ENCODE measurements at regions of chr15 and their contacts with region 1.

Region 1: DNA sequence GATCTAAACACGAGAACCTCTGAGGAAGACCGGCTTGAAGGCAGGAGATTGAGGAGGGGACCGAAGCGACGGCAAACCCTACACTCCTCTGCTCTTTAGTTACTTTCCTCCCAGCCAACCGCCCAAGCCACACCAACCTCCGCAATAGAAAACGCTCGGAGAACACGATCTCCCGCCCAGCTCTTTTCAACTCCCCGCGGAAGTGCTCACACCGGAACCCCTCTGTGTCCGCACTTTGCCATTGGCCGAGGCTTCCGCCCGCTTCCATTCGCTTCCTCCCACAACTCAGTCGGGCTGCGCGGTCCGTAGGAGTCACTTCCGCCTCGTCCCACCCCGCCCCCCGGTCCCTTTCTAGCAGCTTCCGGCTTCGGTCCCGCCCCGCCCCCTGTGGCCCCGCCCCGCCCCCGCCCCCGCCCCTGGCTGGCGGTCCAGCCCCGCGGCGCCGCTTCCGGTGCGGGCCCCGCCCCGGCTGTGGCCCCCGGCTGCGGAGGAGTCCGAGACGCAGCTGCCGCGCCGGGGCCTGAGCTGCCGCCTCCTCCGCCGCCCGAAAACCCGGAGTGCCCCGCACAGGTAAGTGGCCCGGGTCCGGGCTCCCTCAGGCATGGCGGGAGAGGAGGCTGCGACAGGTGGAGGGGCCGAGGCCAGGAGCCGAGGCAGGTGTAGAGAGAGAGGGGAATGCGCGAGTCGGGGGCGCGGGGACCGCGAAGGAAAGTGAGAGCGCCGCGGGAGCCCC is at the start of gene ARID3B:
- DNase-seq: peak; percentile 98
- H3K4me3 ChIP-seq: peak within 1 kb of the TSS; percentile 84 to 94
- H3K27ac ChIP-seq: peak within 1 kb of the TSS; percentile 78 to 81
- H3K4me1 ChIP-seq: peaks cover 1% of the 10 kb centered on the region
- H3K27me3 ChIP-seq: no peaks in the 10 kb centered on the region
- CTCF ChIP-seq: no peak
- POLR2A ChIP-seq: peak; percentile 45
- total RNA-seq, gene ARID3B: 5.1 to 36.7 TPM

Region 2: GRCh38 chr15:74340139-74340538 is 200.8 kb before region 1 on chr15:
- intact Hi-C with region 1: no loop called
- DNase-seq: no peak
- H3K4me3 ChIP-seq: no peak overlapping the region
- H3K27ac ChIP-seq: no peak overlapping the region
- H3K4me1 ChIP-seq: no peaks in the 10 kb centered on the region
- H3K27me3 ChIP-seq: no peaks in the 10 kb centered on the region
- CTCF ChIP-seq: no peak
- POLR2A ChIP-seq: no peak

Region 3: DNA sequence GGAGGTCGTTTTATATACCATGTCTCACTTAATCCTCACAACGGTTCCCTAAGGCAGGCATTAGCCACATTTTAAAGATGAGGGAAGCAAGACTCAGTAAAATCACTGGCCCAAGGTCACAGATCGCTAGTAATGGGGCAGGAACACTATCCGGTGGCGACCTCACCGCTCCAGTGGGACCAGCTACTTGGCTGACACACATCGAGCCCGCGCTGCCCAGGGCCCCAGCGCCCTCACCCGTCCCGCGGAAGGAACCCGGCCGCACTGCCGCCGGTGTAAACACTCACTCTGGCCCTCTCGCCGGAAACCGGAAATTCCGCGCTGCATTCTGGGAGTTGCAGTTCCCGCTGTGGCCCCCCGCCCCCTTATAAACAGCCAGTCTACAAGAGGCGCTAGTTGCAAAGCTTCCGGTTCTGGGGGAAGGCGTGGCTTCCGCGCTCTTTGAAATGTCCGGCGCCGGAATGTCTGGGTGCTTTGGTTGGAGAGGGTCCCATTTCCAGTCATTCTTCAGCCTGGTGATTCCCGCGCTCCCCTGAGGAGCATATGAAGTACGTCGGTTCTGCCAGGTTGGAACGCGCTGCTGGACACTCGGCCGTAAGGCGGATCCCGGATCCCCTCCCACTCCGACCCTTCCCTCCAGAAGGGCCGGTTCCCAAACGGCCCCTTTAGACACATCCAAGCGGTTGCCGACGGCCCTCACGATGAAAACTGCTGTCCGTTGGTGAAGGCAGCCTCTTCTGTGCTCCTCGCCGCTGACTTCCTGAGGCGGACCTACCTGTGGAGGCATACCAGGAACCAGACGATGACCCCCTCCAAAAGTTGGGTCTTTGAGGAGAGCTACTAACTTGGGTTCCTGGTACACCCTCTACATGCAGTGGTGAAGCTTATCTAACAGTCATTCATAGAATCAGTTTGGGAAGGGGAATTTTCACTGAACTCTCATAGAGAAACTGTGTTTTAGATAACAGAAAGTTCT is 79.8 kb before region 1 on chr15 and contains the start of gene UBL7:
- intact Hi-C with region 1: loop called (anchors 5 kb)
- DNase-seq: peak; percentile 98
- H3K4me3 ChIP-seq: peak within 1 kb of the TSS; percentile 55 to 60
- H3K27ac ChIP-seq: peak within 1 kb of the TSS; percentile 73 to 82
- H3K4me1 ChIP-seq: no peaks in the 10 kb centered on the region
- H3K27me3 ChIP-seq: no peaks in the 10 kb centered on the region
- CTCF ChIP-seq: peak in 3 of 4 experiments; percentile 25 to 47 (median 39)
- POLR2A ChIP-seq: peak; percentile 87
- total RNA-seq, gene UBL7: 83.1 to 85.2 TPM

Region 4: DNA sequence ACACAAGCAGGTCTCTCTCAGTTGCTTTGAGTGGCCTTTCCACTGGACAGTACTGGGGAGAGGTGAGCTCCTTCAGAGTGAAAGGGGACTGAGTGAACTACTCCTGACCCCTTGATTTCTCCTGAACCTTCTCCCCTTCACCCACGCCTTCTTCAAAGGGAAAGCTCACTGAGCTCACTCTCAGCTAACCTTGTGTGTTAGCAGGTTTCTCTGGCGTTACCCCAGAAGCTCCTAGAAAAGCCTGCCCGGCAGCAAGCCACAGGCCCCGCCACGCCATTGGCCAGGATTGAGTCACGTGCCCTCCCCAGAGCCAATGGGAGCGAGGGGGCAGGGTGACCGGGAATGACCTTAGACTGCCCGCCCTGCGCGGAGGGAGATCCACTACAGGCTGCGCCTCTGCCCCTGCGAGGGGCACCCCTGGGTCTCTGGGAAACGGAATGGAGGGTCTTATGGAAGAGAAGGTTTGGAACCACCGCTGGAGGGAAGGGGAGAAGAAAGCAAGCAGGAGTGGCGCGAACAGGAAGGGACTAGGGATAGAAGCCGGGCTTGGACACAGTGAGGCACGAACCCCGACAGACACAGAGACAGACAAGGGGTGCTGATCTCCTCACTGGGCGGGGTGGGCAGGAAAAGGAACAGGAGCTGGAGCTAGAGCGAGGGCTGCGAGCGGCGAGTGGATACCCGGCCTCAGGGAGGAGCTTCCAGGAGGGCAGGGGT is 57.4 kb after region 1 on chr15:
- intact Hi-C with region 1: loop called (anchors 5 kb)
- DNase-seq: peak; percentile 94
- H3K4me3 ChIP-seq: peak overlapping the region; percentile 46 to 57
- H3K27ac ChIP-seq: peak overlapping the region; percentile 86 to 91
- H3K4me1 ChIP-seq: peaks cover 9% of the 10 kb centered on the region
- H3K27me3 ChIP-seq: no peaks in the 10 kb centered on the region
- CTCF ChIP-seq: peak in 1 of 4 experiments; percentile 20
- POLR2A ChIP-seq: peak; percentile 95

Measured in prostate gland (tissue), 2 donors.